ENCODE measurements at regions of chr15 and their contacts with region 1.

Region 1: DNA sequence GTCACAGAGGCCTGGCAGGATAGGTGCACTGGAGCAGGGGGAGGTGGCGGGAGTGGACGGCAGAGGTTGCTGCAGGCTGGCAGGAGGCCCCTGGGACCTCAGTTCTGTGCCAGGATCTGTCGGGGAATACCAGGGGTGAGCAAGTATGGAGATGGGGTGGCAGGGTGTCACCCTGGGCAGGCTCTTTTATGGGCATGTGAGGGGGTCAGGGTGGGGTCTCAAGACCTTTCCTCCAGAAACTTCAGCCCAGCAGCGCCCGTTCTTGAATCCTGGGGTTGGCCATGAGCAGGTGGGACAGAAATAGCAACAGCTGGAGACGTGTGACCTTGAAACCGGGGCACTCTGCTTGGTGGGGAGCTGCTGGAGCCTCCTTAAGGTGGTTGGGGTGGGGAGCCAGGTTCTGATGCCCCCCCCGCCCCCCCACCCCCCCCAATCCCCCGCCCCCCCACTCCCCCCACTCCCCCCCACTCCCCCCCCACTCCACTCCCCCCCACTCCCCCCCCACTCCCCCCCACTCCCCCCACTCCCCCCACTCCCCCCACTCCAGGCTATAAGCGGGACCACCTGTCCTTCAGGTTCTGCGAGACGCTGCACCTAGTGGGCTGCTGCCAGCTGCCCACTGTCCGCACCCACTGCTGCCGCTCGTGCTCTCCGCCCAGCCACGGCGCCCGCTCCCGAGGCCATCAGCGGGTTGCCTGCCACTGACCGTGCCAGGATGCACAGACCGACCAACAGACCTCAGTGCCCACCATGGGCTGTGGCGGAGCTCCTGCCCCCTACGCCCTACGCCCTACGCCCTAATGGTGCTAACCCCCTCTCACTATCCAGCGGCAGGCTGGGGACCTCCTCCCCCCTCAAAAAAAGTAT is 84.9 kb downstream of the TBC1D2B start:
- DNase-seq: no peak
- ATAC-seq: no peak
- H3K4me3 ChIP-seq: no peak overlapping the region
- H3K4me3 Mint-ChIP-seq: no peak overlapping the region
- H3K27ac ChIP-seq: no peak overlapping the region
- H3K27ac Mint-ChIP-seq: peak overlapping the region; percentile 61
- H3K4me1 ChIP-seq: peaks cover 32 to 33% of the 10 kb centered on the region in 2 donors
- H3K4me1 Mint-ChIP-seq: peaks cover 41% of the 10 kb centered on the region
- H3K27me3 ChIP-seq: no peaks in the 10 kb centered on the region
- H3K27me3 Mint-ChIP-seq: no peaks in the 10 kb centered on the region
- CTCF ChIP-seq: no peak

Region 2: GRCh38 chr15:77633134-77633912 is 359.3 kb before region 1 on chr15:
- CTCF ChIA-PET with region 1: no interaction called
- POLR2A ChIA-PET with region 1: no interaction called
- intact Hi-C with region 1: no loop called
- DNase-seq: peak; percentile 76
- ATAC-seq: peak; percentile 93
- H3K4me3 ChIP-seq: peak overlapping the region; percentile 17 to 60 (median 52)
- H3K4me3 Mint-ChIP-seq: peak overlapping the region; percentile 85
- H3K27ac ChIP-seq: no peak overlapping the region
- H3K27ac Mint-ChIP-seq: no peak overlapping the region
- H3K4me1 ChIP-seq: peaks cover 21 to 27% of the 10 kb centered on the region in 2 donors
- H3K4me1 Mint-ChIP-seq: peaks cover 15% of the 10 kb centered on the region
- H3K27me3 ChIP-seq: peaks cover 0 to 66% (median 25%) of the 10 kb centered on the region in 4 experiments
- H3K27me3 Mint-ChIP-seq: peaks cover 52% of the 10 kb centered on the region
- CTCF ChIP-seq: peak; percentile 93

Region 3: GRCh38 chr15:77966540-77967290 is 25.9 kb before region 1 on chr15:
- CTCF ChIA-PET with region 1: interaction called, 13 read pairs
- POLR2A ChIA-PET with region 1: no interaction called
- intact Hi-C with region 1: loop called (anchors 1 kb)
- DNase-seq: peak; percentile 62
- ATAC-seq: peak; percentile 68
- H3K4me3 ChIP-seq: no peak overlapping the region
- H3K4me3 Mint-ChIP-seq: no peak overlapping the region
- H3K27ac ChIP-seq: no peak overlapping the region
- H3K27ac Mint-ChIP-seq: no peak overlapping the region
- H3K4me1 ChIP-seq: no peaks in the 10 kb centered on the region
- H3K4me1 Mint-ChIP-seq: peaks cover 4% of the 10 kb centered on the region
- H3K27me3 ChIP-seq: no peaks in the 10 kb centered on the region
- H3K27me3 Mint-ChIP-seq: peaks cover 6% of the 10 kb centered on the region
- CTCF ChIP-seq: peak; percentile 84

Region 4: GRCh38 chr15:78056714-78057269 is 64.2 kb after region 1 on chr15:
- CTCF ChIA-PET with region 1: interaction called, 3 read pairs
- POLR2A ChIA-PET with region 1: interaction called, 3 read pairs
- intact Hi-C with region 1: loop called (anchors 5 kb)
- DNase-seq: peak; percentile 64
- ATAC-seq: peak; percentile 77
- H3K4me3 ChIP-seq: peak overlapping the region in 1 of 5 experiments; percentile 26
- H3K4me3 Mint-ChIP-seq: peak overlapping the region; percentile 42
- H3K27ac ChIP-seq: peak overlapping the region; percentile 54 to 79
- H3K27ac Mint-ChIP-seq: peak overlapping the region; percentile 86
- H3K4me1 ChIP-seq: peaks cover 56 to 58% of the 10 kb centered on the region in 2 donors
- H3K4me1 Mint-ChIP-seq: peaks cover 66% of the 10 kb centered on the region
- H3K27me3 ChIP-seq: no peaks in the 10 kb centered on the region
- H3K27me3 Mint-ChIP-seq: no peaks in the 10 kb centered on the region
- CTCF ChIP-seq: no peak

Region 5: DNA sequence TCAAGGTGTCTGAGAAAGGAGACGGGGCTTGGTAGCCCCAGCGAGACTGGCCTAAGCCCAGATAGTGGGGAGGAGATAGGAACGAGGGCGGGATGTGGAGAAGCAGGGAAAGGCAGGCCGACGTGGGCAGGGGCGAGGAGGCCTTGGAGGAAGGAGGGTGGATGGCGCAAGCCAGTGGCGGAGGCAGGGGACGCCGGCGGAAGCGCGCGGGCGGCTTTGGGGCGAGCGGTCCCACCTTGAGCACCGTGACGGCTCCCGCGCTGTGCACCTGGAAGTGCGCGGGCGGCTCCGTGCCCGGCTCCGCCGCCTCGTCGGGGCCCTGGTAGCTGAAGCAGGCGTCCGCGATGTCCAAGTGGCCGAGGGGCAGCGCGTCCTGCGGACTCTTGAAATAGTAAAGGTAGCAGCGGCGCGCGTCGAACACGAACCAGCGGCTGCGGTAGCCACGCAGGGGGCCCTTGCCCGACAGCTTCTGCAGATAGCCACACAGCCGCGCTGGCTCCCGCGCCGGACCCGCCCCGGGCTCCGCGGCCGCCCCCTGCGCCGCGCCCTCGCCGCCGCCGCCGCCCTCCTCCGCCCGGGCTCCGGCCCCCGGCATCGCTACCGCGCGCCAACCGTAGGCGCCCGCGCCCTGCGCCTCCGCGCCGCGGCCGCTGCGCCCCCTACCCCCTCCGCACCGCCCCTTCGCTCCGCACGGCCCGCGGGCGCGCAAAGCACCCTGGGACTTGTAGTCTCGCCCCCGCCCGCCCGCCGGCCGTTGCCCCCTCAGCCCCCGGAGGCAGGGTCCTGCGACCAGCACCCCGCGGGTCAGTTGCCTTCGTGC is 84.7 kb after region 1 on chr15 and contains the start of gene TBC1D2B:
- CTCF ChIA-PET with region 1: no interaction called
- POLR2A ChIA-PET with region 1: no interaction called
- intact Hi-C with region 1: no loop called
- DNase-seq: peak; percentile 76
- ATAC-seq: peak; percentile 94
- H3K4me3 ChIP-seq: peak within 1 kb of the TSS; percentile 76 to 89 (median 79)
- H3K4me3 Mint-ChIP-seq: peak within 1 kb of the TSS; percentile 93
- H3K27ac ChIP-seq: peak within 1 kb of the TSS in 1 of 2 donors; percentile 1
- H3K27ac Mint-ChIP-seq: peak within 1 kb of the TSS; percentile 89
- H3K4me1 ChIP-seq: peaks cover 17 to 22% of the 10 kb centered on the region in 2 donors
- H3K4me1 Mint-ChIP-seq: peaks cover 26% of the 10 kb centered on the region
- H3K27me3 ChIP-seq: no peaks in the 10 kb centered on the region
- H3K27me3 Mint-ChIP-seq: no peaks in the 10 kb centered on the region
- CTCF ChIP-seq: peak; percentile 12
- total RNA-seq, gene TBC1D2B: 26.1 and 29.8 TPM in 2 replicates

Measured in B cell (primary cell).